T-cell (primary cell): ENCODE measurements at regions of chr17 and their contacts with region 1.

Region 1: DNA sequence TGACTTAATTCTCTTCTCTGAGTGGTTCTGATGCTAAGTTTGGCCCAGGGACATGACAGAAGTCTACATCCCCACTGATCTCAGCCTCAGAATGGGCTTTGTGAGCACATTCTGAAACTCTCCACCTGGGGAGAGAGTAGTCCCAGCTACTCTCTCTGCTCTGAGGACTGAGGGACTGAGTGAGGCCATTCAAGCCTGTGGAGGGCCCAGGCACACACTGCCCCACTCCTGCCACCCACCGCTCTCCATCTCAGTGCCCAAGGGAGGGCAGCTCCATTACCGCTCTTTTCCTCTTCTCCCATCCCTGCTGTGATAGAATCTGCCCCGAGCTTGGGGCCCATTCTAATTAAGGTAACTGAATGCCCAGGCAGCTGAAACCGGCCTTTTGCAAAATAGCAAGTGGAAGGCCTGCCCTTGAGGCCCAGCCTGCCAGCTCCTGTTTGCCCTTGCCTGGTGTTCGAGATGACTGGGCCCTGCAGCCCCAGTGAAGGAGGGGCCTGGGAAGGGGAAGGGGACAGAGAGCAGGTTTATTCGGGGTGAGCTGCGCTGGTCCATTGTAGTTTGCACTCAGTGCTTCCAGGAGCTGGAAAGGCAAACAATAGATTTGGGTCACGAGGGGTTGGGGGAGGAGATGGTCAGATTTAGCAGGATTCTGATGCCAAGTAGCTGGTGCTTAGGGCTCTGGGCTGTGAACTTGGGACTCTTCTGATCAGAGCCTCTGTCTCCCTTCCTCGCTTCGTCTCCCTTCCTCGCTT is 76.2 kb downstream of the RAB11FIP4 start:
- DNase-seq: no peak
- ATAC-seq: no peak
- H3K4me3 ChIP-seq: no peak overlapping the region
- H3K4me3 Mint-ChIP-seq: no peak overlapping the region
- H3K27ac ChIP-seq: no peak overlapping the region
- H3K27ac Mint-ChIP-seq: no peak overlapping the region
- H3K4me1 ChIP-seq: peaks cover 4 to 31% of the 10 kb centered on the region in 2 experiments
- H3K4me1 Mint-ChIP-seq: peaks cover 5 to 22% (median 8%) of the 10 kb centered on the region in 3 donors
- H3K27me3 ChIP-seq: peaks cover 0 to 2% of the 10 kb centered on the region in 2 experiments
- H3K27me3 Mint-ChIP-seq: no peaks in the 10 kb centered on the region

Region 2: DNA sequence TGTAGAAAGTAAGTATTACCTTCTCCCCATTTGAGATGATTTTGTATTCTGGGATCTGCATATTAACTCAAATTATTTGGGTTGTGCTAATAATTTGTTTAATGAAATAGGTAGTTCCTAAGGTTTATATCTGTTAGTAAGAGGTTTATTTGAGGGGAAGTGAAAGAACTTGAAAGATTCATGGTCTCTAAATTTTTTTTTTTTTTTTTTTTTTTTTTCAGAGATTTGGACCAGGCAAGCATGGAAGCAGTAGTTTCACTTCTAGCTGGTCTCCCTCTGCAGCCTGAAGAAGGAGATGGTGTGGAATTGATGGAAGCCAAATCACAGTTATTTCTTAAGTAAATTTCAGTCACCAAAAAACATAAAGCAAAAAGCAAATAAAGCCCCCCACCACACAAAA is 235.8 kb before region 1 on chr17:
- CTCF ChIA-PET with region 1: no interaction called
- POLR2A ChIA-PET with region 1: no interaction called
- DNase-seq: no peak
- ATAC-seq: no peak
- H3K4me3 ChIP-seq: no peak overlapping the region
- H3K4me3 Mint-ChIP-seq: no peak overlapping the region
- H3K27ac ChIP-seq: no peak overlapping the region
- H3K27ac Mint-ChIP-seq: no peak overlapping the region
- H3K4me1 ChIP-seq: no peaks in the 10 kb centered on the region
- H3K4me1 Mint-ChIP-seq: peaks cover 0 to 3% (median 1%) of the 10 kb centered on the region in 3 donors
- H3K27me3 ChIP-seq: no peaks in the 10 kb centered on the region
- H3K27me3 Mint-ChIP-seq: no peaks in the 10 kb centered on the region

Region 3: GRCh38 chr17:31415640-31416502 is 51.8 kb before region 1 on chr17:
- CTCF ChIA-PET with region 1: no interaction called
- POLR2A ChIA-PET with region 1: interaction called in 1 of 2 experiments, 10 read pairs
- DNase-seq: no peak
- ATAC-seq: no peak
- H3K4me3 ChIP-seq: no peak overlapping the region
- H3K4me3 Mint-ChIP-seq: no peak overlapping the region
- H3K27ac ChIP-seq: no peak overlapping the region
- H3K27ac Mint-ChIP-seq: no peak overlapping the region
- H3K4me1 ChIP-seq: no peaks in the 10 kb centered on the region
- H3K4me1 Mint-ChIP-seq: no peaks in the 10 kb centered on the region
- H3K27me3 ChIP-seq: peaks cover 0 to 19% of the 10 kb centered on the region in 2 experiments
- H3K27me3 Mint-ChIP-seq: no peaks in the 10 kb centered on the region